ENCODE measurements at regions of chrX and their contacts with region 1.

Region 1: GRCh38 chrX:145190801-145191389 is 56.4 kb upstream of the SPANXN1 start:
- DNase-seq: no peak
- H3K4me3 ChIP-seq: no peak overlapping the region
- H3K27ac ChIP-seq: no peak overlapping the region
- H3K4me1 ChIP-seq: no peaks in the 10 kb centered on the region
- H3K27me3 ChIP-seq: no peaks in the 10 kb centered on the region
- CTCF ChIP-seq: peak; percentile 74

Region 2: DNA sequence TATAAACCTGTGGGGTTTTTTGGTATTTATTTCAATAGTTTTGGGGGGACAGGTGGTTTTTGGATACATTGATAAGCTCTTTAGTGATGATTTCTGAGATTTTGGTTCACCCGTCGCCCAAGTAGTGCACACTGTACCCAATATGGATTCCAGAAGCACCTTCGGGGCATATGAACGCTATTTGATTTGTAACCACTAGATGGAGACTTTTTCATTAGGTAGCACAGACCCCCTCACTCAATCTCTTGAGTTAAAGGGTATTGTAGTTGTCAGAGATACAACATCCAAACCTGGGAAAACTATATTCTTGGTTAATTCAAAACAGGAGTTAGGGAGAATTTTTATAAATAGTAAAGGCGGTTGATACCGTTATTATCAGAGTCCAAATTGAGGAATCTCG is 1753.5 kb before region 1 on chrX:
- CTCF ChIA-PET with region 1: no interaction called
- POLR2A ChIA-PET with region 1: no interaction called
- intact Hi-C with region 1: loop called (anchors 5 kb)
- DNase-seq: no peak
- H3K4me3 ChIP-seq: no peak overlapping the region
- H3K27ac ChIP-seq: no peak overlapping the region
- H3K4me1 ChIP-seq: no peaks in the 10 kb centered on the region
- H3K27me3 ChIP-seq: no peaks in the 10 kb centered on the region
- CTCF ChIP-seq: peak; percentile 45

Region 3: GRCh38 chrX:143664302-143664701 is 1526.6 kb before region 1 on chrX:
- CTCF ChIA-PET with region 1: no interaction called
- POLR2A ChIA-PET with region 1: no interaction called
- intact Hi-C with region 1: loop called (anchors 1 kb)
- DNase-seq: no peak
- H3K4me3 ChIP-seq: no peak overlapping the region
- H3K27ac ChIP-seq: no peak overlapping the region
- H3K4me1 ChIP-seq: no peaks in the 10 kb centered on the region
- H3K27me3 ChIP-seq: no peaks in the 10 kb centered on the region
- CTCF ChIP-seq: peak; percentile 79

Region 4: DNA sequence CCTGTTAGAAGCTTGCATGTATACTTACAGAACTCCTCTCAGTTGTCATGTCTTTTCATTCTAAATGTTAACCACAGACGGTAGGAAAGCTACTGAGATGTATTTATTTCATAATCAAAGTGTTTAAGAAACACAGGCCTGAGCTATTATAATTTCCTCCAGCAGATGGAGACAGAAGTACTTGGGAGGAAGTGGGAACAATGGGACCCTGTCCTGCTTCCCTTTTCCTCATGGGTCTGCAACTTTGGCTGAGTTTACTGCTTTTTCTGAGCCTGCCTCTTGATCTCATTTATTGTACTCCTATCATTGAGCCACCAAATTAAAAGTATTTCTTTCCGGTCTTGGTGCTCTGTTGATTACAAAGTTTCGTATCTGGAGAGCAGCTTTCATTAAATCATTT is 1402.6 kb before region 1 on chrX:
- CTCF ChIA-PET with region 1: no interaction called
- POLR2A ChIA-PET with region 1: no interaction called
- intact Hi-C with region 1: loop called (anchors 10 kb)
- DNase-seq: no peak
- H3K4me3 ChIP-seq: no peak overlapping the region
- H3K27ac ChIP-seq: no peak overlapping the region
- H3K4me1 ChIP-seq: no peaks in the 10 kb centered on the region
- H3K27me3 ChIP-seq: no peaks in the 10 kb centered on the region
- CTCF ChIP-seq: peak; percentile 60